CD8-positive, alpha-beta memory T cell (primary cell): ENCODE measurements at regions of chr1 and their contacts with region 1.

Region 1: GRCh38 chr1:35947547-35947946 is 16.6 kb downstream of the AGO3 start:
- DNase-seq: no peak
- H3K4me3 ChIP-seq: no peak overlapping the region
- H3K4me3 Mint-ChIP-seq: no peak overlapping the region
- H3K27ac ChIP-seq: no peak overlapping the region
- H3K27ac Mint-ChIP-seq: peak overlapping the region in 3 of 8 donors; percentile 19 to 63 (median 24)
- H3K4me1 ChIP-seq: peaks cover 6% of the 10 kb centered on the region
- H3K4me1 Mint-ChIP-seq: peaks cover 23 to 49% (median 38%) of the 10 kb centered on the region in 3 donors
- H3K27me3 ChIP-seq: no peaks in the 10 kb centered on the region
- H3K27me3 Mint-ChIP-seq: no peaks in the 10 kb centered on the region

Region 2: GRCh38 chr1:35777109-35777508 is 170.4 kb before region 1 on chr1:
- CTCF ChIA-PET with region 1: no interaction called
- POLR2A ChIA-PET with region 1: interaction called, 10 read pairs
- DNase-seq: no peak
- H3K4me3 ChIP-seq: no peak overlapping the region
- H3K4me3 Mint-ChIP-seq: peak overlapping the region in 3 of 7 donors; percentile 9 to 30 (median 22)
- H3K27ac ChIP-seq: no peak overlapping the region
- H3K27ac Mint-ChIP-seq: peak overlapping the region; percentile 2 to 90 (median 50)
- H3K4me1 ChIP-seq: no peaks in the 10 kb centered on the region
- H3K4me1 Mint-ChIP-seq: peaks cover 17 to 34% (median 23%) of the 10 kb centered on the region in 3 donors
- H3K27me3 ChIP-seq: no peaks in the 10 kb centered on the region
- H3K27me3 Mint-ChIP-seq: no peaks in the 10 kb centered on the region

Region 3: GRCh38 chr1:35958558-35958957 is 11.0 kb after region 1 on chr1:
- CTCF ChIA-PET with region 1: no interaction called
- POLR2A ChIA-PET with region 1: no interaction called
- DNase-seq: no peak
- H3K4me3 ChIP-seq: no peak overlapping the region
- H3K4me3 Mint-ChIP-seq: no peak overlapping the region
- H3K27ac ChIP-seq: no peak overlapping the region
- H3K27ac Mint-ChIP-seq: no peak overlapping the region
- H3K4me1 ChIP-seq: no peaks in the 10 kb centered on the region
- H3K4me1 Mint-ChIP-seq: peaks cover 9 to 21% (median 16%) of the 10 kb centered on the region in 3 donors
- H3K27me3 ChIP-seq: no peaks in the 10 kb centered on the region
- H3K27me3 Mint-ChIP-seq: no peaks in the 10 kb centered on the region